Endothelial cell of umbilical vein (primary cell): ENCODE measurements at regions of chr12 and their contacts with region 1.

Region 1: GRCh38 chr12:124745891-124746570 is 117.6 kb downstream of the SCARB1 start:
- DNase-seq: peak; percentile 94
- H3K4me3 ChIP-seq: no peak overlapping the region
- H3K27ac ChIP-seq: peak overlapping the region; percentile 78
- H3K4me1 ChIP-seq: peaks cover 31% of the 10 kb centered on the region
- H3K27me3 ChIP-seq: no peaks in the 10 kb centered on the region
- CTCF ChIP-seq: no peak
- POLR2A ChIP-seq: peak; percentile 45

Region 2: GRCh38 chr12:124388679-124389536 is 357.1 kb before region 1 on chr12:
- CTCF ChIA-PET with region 1: interaction called, 4 read pairs
- POLR2A ChIA-PET with region 1: no interaction called
- dilution Hi-C with region 1: no loop called
- intact Hi-C with region 1: loop called (anchors 5 kb)
- DNase-seq: peak; percentile 87
- H3K4me3 ChIP-seq: peak overlapping the region; percentile 42 to 83 (median 81)
- H3K27ac ChIP-seq: peak overlapping the region; percentile 92
- H3K4me1 ChIP-seq: peaks cover 84% of the 10 kb centered on the region
- H3K27me3 ChIP-seq: no peaks in the 10 kb centered on the region
- CTCF ChIP-seq: no peak
- POLR2A ChIP-seq: peak; percentile 66

Region 3: GRCh38 chr12:124474709-124475108 is 271.3 kb before region 1 on chr12:
- CTCF ChIA-PET with region 1: no interaction called
- POLR2A ChIA-PET with region 1: no interaction called
- dilution Hi-C with region 1: no loop called
- intact Hi-C with region 1: no loop called
- DNase-seq: no peak
- H3K4me3 ChIP-seq: no peak overlapping the region
- H3K27ac ChIP-seq: no peak overlapping the region
- H3K4me1 ChIP-seq: no peaks in the 10 kb centered on the region
- H3K27me3 ChIP-seq: no peaks in the 10 kb centered on the region
- CTCF ChIP-seq: no peak
- POLR2A ChIP-seq: no peak

Region 4: DNA sequence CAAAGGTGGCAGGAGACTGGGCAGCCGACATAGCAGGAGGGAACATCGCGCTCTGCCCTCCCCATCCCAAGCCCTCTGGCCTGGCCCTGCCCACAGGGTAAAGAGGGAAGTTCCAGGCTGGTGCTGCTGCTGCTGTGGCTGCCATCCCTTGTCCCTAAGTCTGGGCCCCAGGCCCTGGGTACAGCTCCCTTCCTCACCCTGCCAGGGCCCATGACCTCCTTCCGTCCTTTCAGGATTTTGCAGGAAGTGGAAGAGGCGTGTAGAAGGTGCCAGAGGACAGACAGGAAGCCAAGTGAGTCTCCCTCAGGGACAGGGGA is 164.0 kb before region 1 on chr12:
- CTCF ChIA-PET with region 1: no interaction called
- POLR2A ChIA-PET with region 1: no interaction called
- dilution Hi-C with region 1: no loop called
- intact Hi-C with region 1: loop called (anchors 5 kb)
- DNase-seq: no peak
- H3K4me3 ChIP-seq: no peak overlapping the region
- H3K27ac ChIP-seq: no peak overlapping the region
- H3K4me1 ChIP-seq: peaks cover 8% of the 10 kb centered on the region
- H3K27me3 ChIP-seq: no peaks in the 10 kb centered on the region
- CTCF ChIP-seq: no peak
- POLR2A ChIP-seq: no peak

Region 5: GRCh38 chr12:124655698-124656516 is 90.1 kb before region 1 on chr12:
- CTCF ChIA-PET with region 1: no interaction called
- POLR2A ChIA-PET with region 1: no interaction called
- dilution Hi-C with region 1: no loop called
- intact Hi-C with region 1: loop called (anchors 1 kb)
- DNase-seq: peak; percentile 87
- H3K4me3 ChIP-seq: no peak overlapping the region
- H3K27ac ChIP-seq: peak overlapping the region; percentile 91
- H3K4me1 ChIP-seq: peaks cover 51% of the 10 kb centered on the region
- H3K27me3 ChIP-seq: no peaks in the 10 kb centered on the region
- CTCF ChIP-seq: no peak
- POLR2A ChIP-seq: no peak

Region 6: DNA sequence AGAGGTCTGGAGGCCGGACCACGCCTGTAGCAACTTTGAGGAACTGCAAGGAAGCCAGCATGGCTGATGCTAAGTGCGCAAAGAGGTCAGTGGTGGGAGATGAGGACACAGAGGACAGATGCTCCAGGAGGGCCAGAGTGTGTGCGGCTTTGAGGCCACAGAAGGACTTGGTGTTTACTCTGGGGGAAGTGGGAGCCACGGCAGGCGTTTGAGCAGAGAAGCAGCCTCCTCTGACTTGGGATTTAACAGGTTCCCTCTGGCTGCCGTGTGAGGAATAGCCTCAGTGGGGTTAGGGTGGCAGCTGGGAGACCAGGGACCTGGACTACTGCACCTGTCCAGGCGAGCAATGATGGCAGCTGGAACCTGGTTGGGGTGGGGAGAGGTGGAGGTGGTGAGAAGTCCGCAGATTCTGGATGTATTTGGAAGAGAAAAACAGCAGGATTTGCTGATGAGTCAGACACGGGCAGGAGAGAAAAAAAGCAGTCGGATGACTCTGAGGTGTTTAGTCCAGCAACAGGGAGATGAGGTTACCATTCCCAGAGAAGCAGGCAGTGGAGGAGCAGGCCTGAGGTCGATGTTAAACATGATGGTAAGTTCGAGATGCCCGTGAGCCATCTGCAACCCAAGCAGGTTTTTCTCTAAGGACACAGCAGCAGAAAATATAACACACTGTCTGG is 25.9 kb before region 1 on chr12:
- CTCF ChIA-PET with region 1: interaction called, 6 read pairs
- POLR2A ChIA-PET with region 1: interaction called, 5 read pairs
- dilution Hi-C with region 1: no loop called
- intact Hi-C with region 1: loop called (anchors 1 kb)
- DNase-seq: peak; percentile 72
- H3K4me3 ChIP-seq: no peak overlapping the region
- H3K27ac ChIP-seq: peak overlapping the region; percentile 80
- H3K4me1 ChIP-seq: peaks cover 27% of the 10 kb centered on the region
- H3K27me3 ChIP-seq: no peaks in the 10 kb centered on the region
- CTCF ChIP-seq: peak; percentile 20 to 38
- POLR2A ChIP-seq: no peak